ENCODE measurements at regions of chr2 and their contacts with region 1.

Region 1: GRCh38 chr2:74740389-74741075 is 86.5 kb downstream of the SEMA4F start:
- DNase-seq: peak; percentile 64
- H3K4me3 ChIP-seq: no peak overlapping the region
- H3K27ac ChIP-seq: peak overlapping the region; percentile 49
- H3K27me3 ChIP-seq: no peaks in the 10 kb centered on the region
- CTCF ChIP-seq: no peak

Region 2: DNA sequence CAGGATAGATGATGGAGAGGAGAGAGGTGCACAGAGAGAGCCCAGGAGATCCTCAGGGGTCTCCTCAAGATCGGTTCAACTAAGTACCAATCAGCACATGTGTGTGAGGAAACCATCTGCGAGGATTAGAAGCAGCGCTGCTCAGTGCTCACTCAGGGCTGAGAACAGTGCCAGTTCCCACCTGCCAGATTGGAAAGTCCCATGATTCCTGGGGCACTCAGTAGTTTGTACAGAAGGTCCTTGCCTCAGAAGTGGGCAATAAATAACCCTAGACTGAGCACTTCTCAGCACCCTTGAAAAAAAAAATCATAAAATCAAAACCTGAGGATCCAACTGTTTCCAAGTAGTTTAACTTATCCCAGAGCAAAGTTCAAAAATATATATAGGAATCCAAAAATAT is 32.7 kb before region 1 on chr2:
- CTCF ChIA-PET with region 1: no interaction called
- POLR2A ChIA-PET with region 1: no interaction called
- DNase-seq: no peak
- H3K4me3 ChIP-seq: no peak overlapping the region
- H3K27ac ChIP-seq: no peak overlapping the region
- H3K27me3 ChIP-seq: no peaks in the 10 kb centered on the region
- CTCF ChIP-seq: no peak

Region 3: DNA sequence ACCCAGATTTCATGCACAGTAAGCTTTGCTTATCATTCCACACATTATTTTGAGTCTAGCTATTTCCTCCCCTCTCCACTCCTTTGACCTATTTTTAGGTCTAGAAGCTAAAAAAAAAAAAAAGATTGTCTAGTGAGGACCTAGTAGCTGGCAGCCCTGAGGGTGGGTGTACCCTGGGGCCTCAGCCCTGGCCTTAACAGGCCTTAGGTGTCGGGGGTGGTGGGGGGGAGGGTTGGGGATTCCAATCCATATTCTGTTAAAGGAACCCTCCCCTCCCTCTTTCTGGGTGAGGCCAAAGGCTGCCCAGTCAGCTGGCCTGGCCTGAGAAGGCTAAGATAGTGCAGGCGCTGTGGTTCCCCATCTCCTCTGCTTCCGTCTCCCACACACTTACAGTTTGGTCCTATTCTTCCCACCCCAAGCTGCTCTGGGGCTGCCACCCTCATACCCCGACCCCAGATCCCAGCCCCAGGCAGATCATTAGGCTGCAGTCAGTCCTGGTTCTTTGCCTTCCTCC is 27.9 kb after region 1 on chr2:
- CTCF ChIA-PET with region 1: no interaction called
- POLR2A ChIA-PET with region 1: interaction called, 10 read pairs
- DNase-seq: no peak
- H3K4me3 ChIP-seq: no peak overlapping the region
- H3K27ac ChIP-seq: peak overlapping the region; percentile 11
- H3K27me3 ChIP-seq: no peaks in the 10 kb centered on the region
- CTCF ChIP-seq: no peak